Spleen (tissue), 13 donors: ENCODE measurements at regions of chr20 and their contacts with region 1.

Region 1: GRCh38 chr20:37384683-37385174 is 38.8 kb downstream of the SRC start:
- DNase-seq: peak; percentile 95
- H3K4me3 ChIP-seq: peak overlapping the region; percentile 13 to 71 (median 45)
- H3K27ac ChIP-seq: peak overlapping the region in 4 of 8 donors; percentile 43 to 75 (median 58)
- H3K4me1 ChIP-seq: peaks cover 6 to 57% (median 39%) of the 10 kb centered on the region in 6 donors
- H3K27me3 ChIP-seq: peaks cover 0 to 37% (median 0%) of the 10 kb centered on the region in 7 donors
- CTCF ChIP-seq: peak; percentile 89 to 98 (median 95)
- POLR2A ChIP-seq: no peak

Region 2: DNA sequence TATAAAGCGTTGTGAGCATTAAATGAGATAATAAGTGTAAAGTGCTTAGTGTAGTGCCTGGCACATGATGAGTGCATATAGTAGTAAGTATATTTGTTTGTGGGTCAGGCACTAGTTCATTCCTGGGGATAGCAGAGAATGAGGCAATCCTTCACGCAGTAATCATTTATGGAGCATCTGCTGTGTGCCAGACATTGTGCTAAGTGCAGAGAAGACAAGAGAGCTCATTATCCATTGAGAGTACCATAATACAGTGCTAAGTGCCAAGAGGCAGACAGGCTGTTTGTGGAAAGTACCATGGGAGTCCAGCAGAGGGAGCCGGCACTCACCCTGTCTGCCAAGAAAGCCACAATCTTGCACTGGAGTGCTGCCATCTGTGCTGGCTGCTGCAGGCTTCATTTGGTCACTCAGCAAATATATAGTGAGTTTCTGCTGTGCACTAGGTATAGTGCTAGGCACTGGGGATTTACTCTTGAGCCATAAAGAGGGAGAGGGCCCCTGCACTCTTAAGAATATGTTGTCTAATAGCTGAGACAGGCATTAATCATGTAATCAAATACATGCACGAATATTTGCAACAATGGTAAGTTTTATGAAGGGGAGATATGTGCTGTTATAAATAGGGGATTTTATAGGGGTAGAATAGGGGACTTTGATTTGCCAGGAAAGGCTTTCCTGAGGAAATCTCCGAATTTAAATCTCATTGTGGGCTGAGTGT is 192.4 kb before region 1 on chr20:
- intact Hi-C with region 1: loop called (anchors 10 kb)
- DNase-seq: peak; percentile 88
- H3K4me3 ChIP-seq: no peak overlapping the region
- H3K27ac ChIP-seq: no peak overlapping the region
- H3K4me1 ChIP-seq: peaks cover 11 to 98% (median 57%) of the 10 kb centered on the region in 6 donors
- H3K27me3 ChIP-seq: no peaks in the 10 kb centered on the region
- CTCF ChIP-seq: peak in 10 of 11 experiments; percentile 50 to 93 (median 86)
- POLR2A ChIP-seq: no peak

Region 3: GRCh38 chr20:37276494-37277252 is 108.1 kb before region 1 on chr20:
- intact Hi-C with region 1: loop called (anchors 10 kb)
- DNase-seq: no peak
- H3K4me3 ChIP-seq: no peak overlapping the region
- H3K27ac ChIP-seq: peak overlapping the region; percentile 2 to 75 (median 60)
- H3K4me1 ChIP-seq: peaks cover 6 to 55% (median 35%) of the 10 kb centered on the region in 6 donors
- H3K27me3 ChIP-seq: no peaks in the 10 kb centered on the region
- CTCF ChIP-seq: peak in 1 of 11 experiments; percentile 29
- POLR2A ChIP-seq: no peak

Region 4: GRCh38 chr20:37449276-37449675 is 64.5 kb after region 1 on chr20:
- intact Hi-C with region 1: no loop called
- DNase-seq: no peak
- H3K4me3 ChIP-seq: no peak overlapping the region
- H3K27ac ChIP-seq: no peak overlapping the region
- H3K4me1 ChIP-seq: no peaks in the 10 kb centered on the region
- H3K27me3 ChIP-seq: no peaks in the 10 kb centered on the region
- CTCF ChIP-seq: no peak
- POLR2A ChIP-seq: no peak

Region 5: GRCh38 chr20:37463726-37464494 is 79.2 kb after region 1 on chr20:
- intact Hi-C with region 1: no loop called
- DNase-seq: no peak
- H3K4me3 ChIP-seq: no peak overlapping the region
- H3K27ac ChIP-seq: no peak overlapping the region
- H3K4me1 ChIP-seq: no peaks in the 10 kb centered on the region
- H3K27me3 ChIP-seq: no peaks in the 10 kb centered on the region
- CTCF ChIP-seq: no peak
- POLR2A ChIP-seq: no peak

Region 6: GRCh38 chr20:37534401-37535157 is 149.8 kb after region 1 on chr20:
- intact Hi-C with region 1: loop called (anchors 5 kb)
- DNase-seq: peak; percentile 50
- H3K4me3 ChIP-seq: no peak overlapping the region
- H3K27ac ChIP-seq: peak overlapping the region in 1 of 8 donors; percentile 18
- H3K4me1 ChIP-seq: peaks cover 0 to 13% (median 8%) of the 10 kb centered on the region in 6 donors
- H3K27me3 ChIP-seq: no peaks in the 10 kb centered on the region
- CTCF ChIP-seq: peak; percentile 80 to 97 (median 90)
- POLR2A ChIP-seq: no peak